IMR-90 (cell line): ENCODE measurements at regions of chr20 and their contacts with region 1.

Region 1: GRCh38 chr20:40797425-40797824 is 108.4 kb upstream of the MAFB start:
- DNase-seq: peak; percentile 17
- ATAC-seq: peak; percentile 40; the same call in 1 of the 2 replicates
- H3K4me3 ChIP-seq: no peak overlapping the region
- H3K27ac ChIP-seq: no peak overlapping the region
- H3K4me1 ChIP-seq: no peaks in the 10 kb centered on the region
- H3K27me3 ChIP-seq: no peaks in the 10 kb centered on the region
- CTCF ChIP-seq: peak; percentile 51
- POLR2A ChIP-seq: no peak
- RAD21 ChIP-seq: peak; percentile 38

Region 2: GRCh38 chr20:40218316-40218969 is 579.0 kb before region 1 on chr20:
- CTCF ChIA-PET with region 1: no interaction called
- POLR2A ChIA-PET with region 1: no interaction called
- dilution Hi-C with region 1: no loop called
- in situ Hi-C with region 1: no loop called
- intact Hi-C with region 1: loop called (anchors 5 kb)
- DNase-seq: no peak
- ATAC-seq: no peak
- H3K4me3 ChIP-seq: no peak overlapping the region
- H3K27ac ChIP-seq: no peak overlapping the region
- H3K4me1 ChIP-seq: no peaks in the 10 kb centered on the region
- H3K27me3 ChIP-seq: no peaks in the 10 kb centered on the region
- CTCF ChIP-seq: no peak
- POLR2A ChIP-seq: no peak
- RAD21 ChIP-seq: no peak

Region 3: GRCh38 chr20:40663991-40664880 is 133.2 kb before region 1 on chr20:
- CTCF ChIA-PET with region 1: no interaction called
- POLR2A ChIA-PET with region 1: no interaction called
- dilution Hi-C with region 1: no loop called
- in situ Hi-C with region 1: no loop called
- intact Hi-C with region 1: no loop called
- DNase-seq: no peak
- ATAC-seq: no peak
- H3K4me3 ChIP-seq: no peak overlapping the region
- H3K27ac ChIP-seq: no peak overlapping the region
- H3K4me1 ChIP-seq: no peaks in the 10 kb centered on the region
- H3K27me3 ChIP-seq: peaks cover 6% of the 10 kb centered on the region; the same call in 1 of the 2 replicates
- CTCF ChIP-seq: no peak
- POLR2A ChIP-seq: no peak
- RAD21 ChIP-seq: no peak

Region 4: DNA sequence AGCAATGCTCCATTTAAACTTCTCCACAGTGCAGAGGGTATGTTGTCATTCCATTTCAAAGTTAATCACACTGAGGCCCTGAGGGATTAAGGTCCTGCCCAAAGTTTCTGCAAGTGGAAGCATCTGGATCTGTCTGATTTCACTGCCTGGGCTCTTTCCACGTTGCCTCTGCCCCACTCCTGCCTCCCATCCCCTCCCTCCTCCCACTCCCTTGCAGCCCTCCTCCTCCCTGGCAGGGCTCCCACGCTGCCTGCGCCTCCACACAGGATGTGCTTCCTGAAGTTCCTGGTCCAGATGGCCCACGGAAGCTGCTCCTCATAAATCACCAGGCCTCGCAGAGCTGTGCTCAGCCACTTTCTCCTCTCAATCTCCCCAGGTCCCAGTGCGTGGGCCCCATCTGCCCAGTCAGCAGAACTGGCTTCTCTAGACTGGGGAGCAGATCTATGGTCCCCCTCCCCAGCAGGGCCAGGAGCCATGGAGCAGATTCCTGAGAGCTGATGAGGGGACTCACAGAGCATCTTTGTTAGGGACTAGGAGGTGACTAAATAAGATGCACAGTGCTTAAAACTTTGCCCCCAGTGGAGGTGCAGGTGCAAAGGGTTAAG is 43.0 kb before region 1 on chr20:
- CTCF ChIA-PET with region 1: no interaction called
- POLR2A ChIA-PET with region 1: no interaction called
- dilution Hi-C with region 1: no loop called
- in situ Hi-C with region 1: no loop called
- intact Hi-C with region 1: no loop called
- DNase-seq: no peak
- ATAC-seq: no peak
- H3K4me3 ChIP-seq: no peak overlapping the region
- H3K27ac ChIP-seq: no peak overlapping the region
- H3K4me1 ChIP-seq: no peaks in the 10 kb centered on the region; the same call in 1 of the 2 replicates
- H3K27me3 ChIP-seq: no peaks in the 10 kb centered on the region; the same call in 1 of the 2 replicates
- CTCF ChIP-seq: no peak
- POLR2A ChIP-seq: no peak
- RAD21 ChIP-seq: no peak

Region 5: GRCh38 chr20:42559665-42560064 is 1762.2 kb after region 1 on chr20:
- CTCF ChIA-PET with region 1: no interaction called
- POLR2A ChIA-PET with region 1: no interaction called
- dilution Hi-C with region 1: no loop called
- in situ Hi-C with region 1: no loop called
- intact Hi-C with region 1: loop called (anchors 5 kb)
- DNase-seq: no peak
- ATAC-seq: no peak
- H3K4me3 ChIP-seq: no peak overlapping the region
- H3K27ac ChIP-seq: no peak overlapping the region
- H3K4me1 ChIP-seq: no peaks in the 10 kb centered on the region
- H3K27me3 ChIP-seq: no peaks in the 10 kb centered on the region
- CTCF ChIP-seq: no peak
- POLR2A ChIP-seq: no peak
- RAD21 ChIP-seq: no peak